ENCODE measurements at regions of chr6 and their contacts with region 1.

Region 1: GRCh38 chr6:161476711-161477110 is 202.8 kb upstream of the AGPAT4 start:
- DNase-seq: no peak
- ATAC-seq: no peak

Region 2: GRCh38 chr6:161439093-161439492 is 37.6 kb before region 1 on chr6:
- intact Hi-C with region 1: loop called (anchors 5 kb)
- DNase-seq: peak; percentile 78
- ATAC-seq: peak; percentile 44

Measured in Right ventricle myocardium inferior (tissue), 1 donor.